AG04449 (cell line): ENCODE measurements at regions of chr4 and their contacts with region 1.

Region 1: DNA sequence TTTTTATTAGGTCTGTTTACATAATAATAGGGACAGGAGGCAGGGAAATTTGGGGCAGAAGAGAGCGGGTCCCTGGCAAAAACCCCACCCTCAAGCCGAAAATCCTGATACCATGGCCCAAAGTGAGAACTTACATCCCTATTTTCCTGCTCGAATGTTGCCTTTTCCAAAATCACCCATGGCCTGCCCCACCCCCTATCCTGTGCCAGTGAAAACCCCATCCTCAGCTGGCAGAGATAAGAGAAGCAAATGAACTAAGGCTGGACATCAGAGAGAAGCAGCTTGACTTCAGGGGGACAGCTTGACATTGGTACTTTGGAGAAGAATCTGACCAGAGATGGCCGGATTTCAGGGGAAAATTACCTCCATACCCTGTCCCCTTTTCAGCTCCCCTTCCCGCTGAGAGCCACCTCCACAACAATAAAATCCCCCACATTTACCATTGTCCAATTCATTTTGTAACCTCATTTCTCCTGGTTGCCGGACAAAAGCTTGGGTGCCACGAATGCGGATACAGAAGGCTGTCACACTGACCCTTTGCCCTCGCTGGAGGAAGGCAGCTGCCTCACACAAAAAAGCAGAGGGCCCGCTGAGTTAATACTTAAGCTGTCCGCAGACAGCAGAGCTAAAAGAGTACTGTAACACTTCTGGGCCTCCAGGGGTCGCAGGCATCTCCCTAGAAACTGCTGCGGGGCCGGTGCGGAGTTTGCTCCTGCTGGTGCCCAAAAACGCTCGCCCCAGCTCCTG is 196.2 kb downstream of the SNCA start:
- DNase-seq: peak; percentile 2
- H3K4me3 ChIP-seq: no peak overlapping the region; the same call in 1 of the 2 replicates
- CTCF ChIP-seq: peak; percentile 80

Region 2: DNA sequence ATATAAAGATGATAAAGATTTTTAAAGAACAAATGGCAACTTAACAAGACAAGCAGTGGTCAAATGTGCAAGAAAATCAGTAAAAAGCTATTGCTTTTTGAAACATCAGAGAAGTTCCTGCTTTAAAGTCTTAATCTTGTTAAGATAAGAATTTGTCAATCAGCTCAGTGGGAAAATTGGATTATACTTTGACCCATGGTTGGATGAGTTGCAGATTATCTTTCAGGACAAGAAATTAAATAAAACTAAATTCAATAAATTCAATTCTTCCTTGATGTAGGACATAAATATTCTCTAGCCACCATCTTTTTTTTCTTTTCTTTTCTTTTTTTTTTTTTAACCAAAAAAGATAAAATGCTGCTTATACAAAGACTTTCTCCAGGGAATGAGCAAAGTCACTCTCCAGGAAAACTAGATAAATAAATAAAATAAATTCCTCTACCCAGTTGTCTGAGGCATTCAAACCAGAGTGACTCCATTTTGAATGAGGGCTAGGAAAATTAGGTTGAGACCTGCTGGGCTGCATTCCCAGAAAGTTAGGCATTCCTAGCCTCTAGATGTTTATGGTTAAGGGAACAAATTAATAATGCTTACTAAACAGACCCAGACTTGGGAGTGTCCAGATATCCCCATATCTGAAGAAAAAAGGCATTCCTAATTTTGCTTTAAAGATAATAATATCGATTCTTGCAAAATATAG is 15.0 kb before region 1 on chr4:
- CTCF ChIA-PET with region 1: interaction called, 10 read pairs
- POLR2A ChIA-PET with region 1: no interaction called
- DNase-seq: no peak
- H3K4me3 ChIP-seq: no peak overlapping the region
- CTCF ChIP-seq: no peak

Region 3: GRCh38 chr4:89657931-89658700 is 17.3 kb after region 1 on chr4:
- CTCF ChIA-PET with region 1: interaction called, 25 read pairs
- POLR2A ChIA-PET with region 1: no interaction called
- DNase-seq: peak; percentile 3
- H3K4me3 ChIP-seq: no peak overlapping the region
- CTCF ChIP-seq: peak; percentile 36

Region 4: GRCh38 chr4:89868999-89869589 is 228.3 kb after region 1 on chr4:
- CTCF ChIA-PET with region 1: interaction called, 22 read pairs
- POLR2A ChIA-PET with region 1: no interaction called
- DNase-seq: no peak
- H3K4me3 ChIP-seq: no peak overlapping the region
- CTCF ChIP-seq: no peak

Region 5: DNA sequence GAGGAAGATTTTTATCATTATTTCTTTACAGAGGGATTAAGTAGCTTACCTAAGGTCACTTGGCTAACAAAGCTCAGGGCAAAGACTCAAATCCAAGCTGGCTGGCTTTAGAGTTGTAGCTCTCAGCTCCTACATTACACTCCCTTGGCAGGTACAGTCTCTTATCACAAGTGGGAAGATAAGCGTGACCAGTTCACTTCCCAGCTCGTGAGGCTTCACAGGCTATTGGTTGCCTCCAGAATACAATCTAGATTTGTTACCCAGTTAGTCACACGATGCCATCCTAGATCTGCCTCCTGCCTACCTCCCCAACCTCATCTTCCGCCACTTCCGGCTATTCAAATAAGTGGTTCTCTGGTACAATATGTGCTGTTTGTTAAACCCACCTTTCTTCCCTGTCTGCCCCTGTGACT is 257.5 kb after region 1 on chr4:
- CTCF ChIA-PET with region 1: interaction called, 12 read pairs
- POLR2A ChIA-PET with region 1: no interaction called
- DNase-seq: no peak
- H3K4me3 ChIP-seq: no peak overlapping the region
- CTCF ChIP-seq: no peak